GM10248 (cell line): ENCODE measurements at regions of chr17 and their contacts with region 1.

Region 1: DNA sequence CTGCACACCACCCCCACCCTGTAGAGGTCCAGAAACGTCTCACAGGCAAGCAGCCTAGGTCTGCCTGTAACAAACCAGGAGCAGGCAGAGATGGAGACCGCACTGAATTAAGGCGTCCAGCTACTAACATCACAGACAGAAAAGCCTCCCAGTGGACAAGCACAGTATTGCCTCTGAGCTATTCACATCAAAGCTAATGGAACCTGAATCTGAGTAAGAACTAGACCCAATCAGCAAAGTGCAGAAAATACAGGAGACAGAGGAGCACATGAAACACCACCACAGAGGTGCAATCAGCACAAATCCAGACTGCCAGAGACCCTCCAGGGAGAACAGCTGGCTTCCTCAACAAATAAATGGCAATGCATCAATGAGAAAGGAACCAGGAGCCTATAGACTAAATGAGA is 22.2 kb upstream of the PEMT start:
- DNase-seq: peak; percentile 64
- CTCF ChIP-seq: peak; percentile 55

Region 2: GRCh38 chr17:17591355-17592298 is 22.1 kb before region 1 on chr17 and contains the start of gene PEMT:
- CTCF ChIA-PET with region 1: interaction called, 19 read pairs
- POLR2A ChIA-PET with region 1: no interaction called
- DNase-seq: peak; percentile 96
- CTCF ChIP-seq: no peak

Region 3: DNA sequence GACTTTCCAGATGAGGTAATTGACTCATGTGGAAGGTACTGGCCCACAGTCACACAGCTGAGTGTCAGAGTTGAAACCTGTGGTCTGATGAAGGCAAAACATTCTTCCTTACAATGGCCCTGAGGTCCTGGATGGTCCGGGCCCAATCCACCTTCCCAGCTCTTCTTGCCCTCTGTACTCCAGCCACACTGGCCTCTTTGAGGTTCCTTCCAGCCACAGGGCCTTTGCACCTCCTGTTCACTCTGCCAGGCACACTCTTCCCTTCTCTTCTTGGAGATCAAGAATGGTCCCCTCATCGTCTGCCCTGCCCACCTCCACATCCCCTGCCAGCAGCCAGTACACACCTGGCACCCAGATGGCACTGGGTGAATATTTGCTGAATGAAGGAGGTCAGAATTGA is 15.7 kb before region 1 on chr17:
- CTCF ChIA-PET with region 1: interaction called, 19 read pairs
- POLR2A ChIA-PET with region 1: no interaction called
- DNase-seq: no peak
- CTCF ChIP-seq: no peak

Region 4: DNA sequence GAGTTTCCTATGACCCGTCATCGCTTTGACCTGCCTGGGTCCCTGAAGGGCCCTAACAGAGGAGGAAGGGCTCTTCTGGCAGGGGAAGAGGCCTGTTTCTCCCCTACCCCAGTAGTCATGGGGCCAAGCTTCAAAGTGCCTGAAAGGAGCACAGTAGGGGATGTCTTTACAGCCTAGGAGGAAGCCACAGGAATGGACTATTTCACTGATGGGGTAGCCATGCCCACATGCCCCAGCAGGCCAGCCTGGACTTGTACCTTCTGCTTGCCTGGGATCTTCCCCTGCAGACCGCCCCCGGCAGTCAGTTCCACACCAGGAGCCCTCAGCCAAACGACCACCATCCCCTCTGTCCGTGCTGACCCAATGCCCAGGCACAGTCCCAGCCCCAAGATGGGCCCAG is 19.6 kb after region 1 on chr17:
- CTCF ChIA-PET with region 1: interaction called, 15 read pairs
- POLR2A ChIA-PET with region 1: no interaction called
- DNase-seq: no peak
- CTCF ChIP-seq: no peak

Region 5: GRCh38 chr17:17641621-17642409 is 28.1 kb after region 1 on chr17:
- CTCF ChIA-PET with region 1: interaction called, 11 read pairs
- POLR2A ChIA-PET with region 1: no interaction called
- DNase-seq: peak; percentile 77
- CTCF ChIP-seq: peak; percentile 88